ENCODE measurements at regions of chr2 and their contacts with region 1.

Region 1: DNA sequence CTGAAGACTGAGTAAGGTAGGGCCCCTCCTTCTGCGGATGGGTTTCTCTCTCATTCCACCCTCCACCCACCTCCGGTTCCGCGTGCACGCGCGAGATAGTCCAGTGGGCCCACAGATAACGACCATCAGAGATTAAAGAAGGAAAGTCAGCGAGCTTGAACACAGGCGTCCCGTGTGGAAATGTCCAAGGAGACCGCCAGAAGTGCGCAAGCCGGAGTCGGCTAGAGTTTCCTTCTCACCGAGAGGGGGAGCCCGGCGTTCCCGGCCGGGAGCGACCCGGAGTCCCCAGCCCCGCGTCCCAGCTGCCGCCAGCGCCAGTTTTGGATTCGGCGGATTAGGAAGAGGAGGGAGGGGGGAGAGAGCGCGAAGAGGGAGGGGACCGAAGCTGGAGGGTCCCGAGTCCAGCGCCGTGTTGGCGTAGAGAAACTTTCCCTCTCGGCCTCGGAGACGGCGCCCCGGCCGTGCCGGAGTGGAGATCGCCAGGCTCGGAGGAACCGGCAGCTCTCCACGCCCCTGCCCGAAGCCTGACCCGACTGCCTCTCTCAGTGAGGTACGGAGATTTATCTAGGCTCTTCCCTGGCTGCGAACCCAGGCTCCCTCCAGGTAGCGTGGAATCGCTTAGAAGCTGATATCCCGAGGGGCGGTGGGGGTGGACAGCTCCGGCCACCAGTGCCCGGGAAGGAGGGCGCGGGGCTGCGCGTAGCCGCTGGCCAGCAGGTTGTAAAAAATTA is at the start of gene GULP1:
- DNase-seq: peak; percentile 72
- H3K4me3 ChIP-seq: peak within 1 kb of the TSS; percentile 75 to 91 (median 79)
- H3K27ac ChIP-seq: peak within 1 kb of the TSS; percentile 72
- H3K4me1 ChIP-seq: peaks cover 24% of the 10 kb centered on the region
- H3K27me3 ChIP-seq: no peaks in the 10 kb centered on the region
- CTCF ChIP-seq: peak; percentile 48 to 79
- total RNA-seq, gene GULP1: 17.3 to 49.7 TPM

Region 2: DNA sequence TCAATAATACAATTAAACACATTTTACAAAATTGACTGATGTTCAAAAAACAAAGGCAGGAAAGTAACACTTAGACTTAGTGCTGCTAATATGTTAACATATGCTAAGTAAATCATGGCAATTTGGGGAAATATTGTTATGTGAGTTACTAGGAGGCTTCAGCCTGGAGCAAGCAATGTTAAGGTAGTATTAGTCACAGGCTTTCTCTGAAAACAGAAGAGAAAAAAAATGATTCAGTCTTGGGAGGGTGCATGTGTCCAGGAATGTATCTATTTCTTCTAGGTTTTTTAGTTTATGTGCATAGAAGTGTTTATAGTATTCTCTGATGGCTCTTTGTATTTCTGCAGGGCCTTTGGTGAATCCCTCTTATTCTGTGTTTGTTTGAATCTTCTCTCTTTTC is 391.8 kb before region 1 on chr2:
- CTCF ChIA-PET with region 1: no interaction called
- dilution Hi-C with region 1: no loop called
- in situ Hi-C with region 1: no loop called
- intact Hi-C with region 1: loop called (anchors 10 kb)
- DNase-seq: peak; percentile 16
- H3K4me3 ChIP-seq: no peak overlapping the region
- H3K27ac ChIP-seq: no peak overlapping the region
- H3K4me1 ChIP-seq: no peaks in the 10 kb centered on the region
- H3K27me3 ChIP-seq: no peaks in the 10 kb centered on the region
- CTCF ChIP-seq: no peak

Region 3: GRCh38 chr2:188142636-188143295 is 149.0 kb before region 1 on chr2:
- CTCF ChIA-PET with region 1: no interaction called
- dilution Hi-C with region 1: no loop called
- in situ Hi-C with region 1: no loop called
- intact Hi-C with region 1: loop called (anchors 5 kb)
- DNase-seq: peak; percentile 81
- H3K4me3 ChIP-seq: peak overlapping the region in 1 of 3 experiments; percentile 15
- H3K27ac ChIP-seq: peak overlapping the region; percentile 94
- H3K4me1 ChIP-seq: peaks cover 18% of the 10 kb centered on the region
- H3K27me3 ChIP-seq: no peaks in the 10 kb centered on the region
- CTCF ChIP-seq: no peak

Region 4: GRCh38 chr2:188381614-188382013 is 89.8 kb after region 1 on chr2:
- CTCF ChIA-PET with region 1: no interaction called
- dilution Hi-C with region 1: no loop called
- in situ Hi-C with region 1: no loop called
- intact Hi-C with region 1: loop called (anchors 5 kb)
- DNase-seq: peak; percentile 78
- H3K4me3 ChIP-seq: no peak overlapping the region
- H3K27ac ChIP-seq: peak overlapping the region; percentile 22
- H3K4me1 ChIP-seq: peaks cover 10% of the 10 kb centered on the region
- H3K27me3 ChIP-seq: no peaks in the 10 kb centered on the region
- CTCF ChIP-seq: no peak

Region 5: GRCh38 chr2:188512456-188512855 is 220.7 kb after region 1 on chr2:
- CTCF ChIA-PET with region 1: no interaction called
- dilution Hi-C with region 1: no loop called
- in situ Hi-C with region 1: loop called in 1 of 2 experiments (anchors 10 kb)
- intact Hi-C with region 1: loop called (anchors 1 kb)
- DNase-seq: peak; percentile 25
- H3K4me3 ChIP-seq: no peak overlapping the region
- H3K27ac ChIP-seq: no peak overlapping the region
- H3K4me1 ChIP-seq: no peaks in the 10 kb centered on the region
- H3K27me3 ChIP-seq: no peaks in the 10 kb centered on the region
- CTCF ChIP-seq: peak; percentile 44 to 59

Measured in mammary epithelial cell (primary cell).